ENCODE measurements at regions of chr11 and their contacts with region 1.

Region 1: GRCh38 chr11:36702330-36703055 is 104.5 kb upstream of the RAG2 start:
- DNase-seq: peak in 34 of 42 donors; percentile 5 to 81 (median 46)

Region 2: DNA sequence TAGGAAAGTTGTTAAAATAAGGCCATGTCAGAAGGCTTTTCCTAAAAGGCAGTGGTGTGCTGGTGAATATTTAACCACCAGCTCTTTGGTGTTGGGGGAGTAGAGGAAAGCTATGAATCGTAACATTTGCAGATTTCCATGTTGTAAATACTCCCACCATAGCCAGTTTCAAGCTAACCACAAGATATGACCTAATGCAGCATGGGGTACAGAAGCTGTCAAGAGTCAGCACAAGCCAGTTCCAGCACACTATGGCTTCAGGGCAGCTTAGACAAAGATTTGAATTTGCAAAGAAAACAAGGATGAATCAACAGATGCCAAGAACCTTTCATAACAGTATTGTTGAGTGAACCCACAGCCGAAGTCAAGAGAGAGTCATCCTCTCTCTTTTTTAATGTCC is 453.2 kb before region 1 on chr11:
- intact Hi-C with region 1: no loop called
- DNase-seq: no peak

Region 3: DNA sequence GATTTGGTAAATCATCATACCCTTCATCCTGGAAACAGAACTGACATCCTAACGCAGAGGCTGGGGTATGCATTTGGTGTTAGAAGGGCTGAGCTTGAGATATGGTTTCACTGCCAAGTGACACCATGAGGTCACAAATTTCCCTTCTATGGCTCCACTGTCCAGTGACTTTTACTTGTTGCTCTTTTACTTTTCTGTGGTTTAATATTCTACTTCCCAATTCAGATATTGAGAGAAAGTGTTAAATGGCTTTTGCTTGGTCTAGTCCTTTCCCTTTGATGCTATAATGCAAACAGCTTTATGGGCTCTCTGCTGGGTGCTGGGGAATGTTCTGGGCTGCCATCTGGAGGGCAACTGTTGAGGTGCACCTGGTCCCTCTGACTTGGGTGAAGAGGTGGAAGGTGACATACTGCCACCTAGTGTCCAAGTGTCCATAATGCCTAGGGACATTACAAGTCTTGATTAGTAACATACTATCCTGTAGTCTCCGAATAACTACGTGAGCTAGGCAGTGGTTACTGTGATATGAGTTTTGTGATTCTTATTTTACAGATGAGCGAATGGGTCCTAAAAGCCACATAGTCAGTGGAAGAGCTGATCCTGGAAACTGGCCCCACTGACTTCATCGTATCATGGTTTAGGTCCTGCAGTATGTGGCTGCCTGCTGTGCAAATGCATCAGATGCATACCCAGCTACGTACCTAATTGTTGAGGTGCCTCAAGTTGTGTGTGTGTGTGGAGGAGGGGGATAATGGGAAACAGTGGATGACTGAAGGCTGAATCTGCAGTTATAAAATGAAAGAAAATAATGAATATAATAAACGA is 44.6 kb after region 1 on chr11:
- intact Hi-C with region 1: loop called (anchors 5 kb)
- DNase-seq: peak; percentile 68 to 94 (median 86)

Region 4: DNA sequence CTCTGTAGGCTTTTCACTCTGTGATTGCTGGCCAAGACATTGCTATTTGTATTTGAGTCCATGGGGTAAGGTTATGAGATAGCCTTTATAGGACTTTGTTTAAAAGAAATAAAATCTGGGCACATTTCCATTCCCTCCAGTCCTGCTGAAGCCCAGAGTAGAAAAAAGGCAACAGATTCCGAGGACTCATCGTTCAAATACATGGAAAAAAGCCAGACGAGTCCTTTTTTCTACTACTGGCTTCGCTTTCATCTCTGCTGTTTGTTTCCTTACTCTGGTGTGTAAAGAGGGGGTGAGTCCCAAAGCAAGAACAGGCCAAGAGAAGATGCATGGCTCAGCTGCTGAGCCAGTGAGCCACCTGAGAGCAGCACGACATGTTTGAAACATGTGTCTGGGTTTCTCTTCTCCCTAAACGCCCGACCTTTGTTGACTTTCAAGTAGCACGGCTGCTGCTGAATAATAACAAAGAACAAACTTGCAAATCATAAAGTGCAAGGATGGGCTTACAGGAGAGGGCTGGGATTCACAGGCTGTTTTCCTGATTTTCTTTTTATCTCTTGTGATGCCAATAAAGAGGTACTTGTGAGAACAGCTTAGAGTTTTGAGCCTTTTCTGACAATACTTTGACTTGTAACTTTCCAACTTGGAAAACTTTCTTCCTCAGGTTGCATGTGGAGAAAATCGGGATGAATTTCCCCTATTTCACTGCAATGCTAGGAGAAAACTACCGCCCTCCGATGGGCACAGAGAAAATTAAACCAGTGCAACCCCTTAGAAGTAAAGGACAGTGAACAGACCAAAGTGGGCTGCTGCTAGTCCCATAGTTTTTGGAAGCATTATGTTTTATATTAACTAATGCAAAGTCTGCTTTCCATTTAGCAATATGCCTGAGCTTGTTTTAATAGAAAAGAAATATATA is 90.8 kb after region 1 on chr11:
- intact Hi-C with region 1: no loop called
- DNase-seq: peak in 2 of 42 donors; percentile 5 to 9

Measured in head of caudate nucleus (tissue), 42 donors.